ENCODE measurements at regions of chr13 and their contacts with region 1.

Region 1: DNA sequence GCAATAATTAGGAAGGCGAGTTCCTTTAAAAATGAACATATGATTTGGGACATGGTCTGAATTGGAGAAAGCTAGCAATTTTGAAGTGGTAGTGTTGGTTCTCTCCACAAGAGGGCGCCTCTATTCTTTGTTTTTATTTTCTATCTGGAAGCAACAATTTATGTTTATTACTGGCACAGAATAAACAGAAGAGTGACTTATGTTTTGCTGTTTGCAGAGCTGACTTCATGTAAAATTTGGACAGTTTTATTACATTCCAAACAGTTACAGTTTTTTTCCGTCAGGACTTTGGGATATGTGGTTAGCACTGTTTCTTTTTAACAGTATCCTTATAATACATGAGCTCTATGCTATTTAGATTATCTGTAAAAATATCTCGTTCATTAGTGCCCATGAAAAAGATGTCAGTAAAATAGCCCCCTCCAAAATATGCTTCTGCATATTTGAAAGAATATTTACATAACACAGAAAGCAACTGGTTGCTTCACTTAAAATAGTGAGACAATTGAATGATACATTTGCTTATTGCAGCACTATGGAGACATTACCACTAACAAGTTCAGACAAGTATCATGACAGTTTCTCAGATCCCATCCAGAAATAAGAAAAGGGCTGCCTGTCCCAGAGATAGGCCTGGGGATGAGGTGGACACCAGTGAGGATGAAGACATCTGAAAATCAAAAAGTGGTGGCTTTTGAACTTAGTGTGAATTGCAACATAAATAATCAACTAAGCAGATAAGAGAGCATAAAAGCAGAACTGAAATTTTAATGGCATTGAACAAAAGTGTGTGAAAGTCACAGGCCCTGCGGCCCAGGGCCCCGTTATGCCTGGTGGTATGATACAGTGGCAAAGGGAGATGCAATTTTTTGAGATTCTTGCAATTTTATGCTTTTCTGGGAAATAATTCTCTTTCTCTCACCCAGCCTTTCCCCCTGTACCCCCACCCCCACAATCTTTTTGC is 32.3 kb upstream of the FGF9 start:
- DNase-seq: no peak
- ATAC-seq: no peak
- H3K4me3 ChIP-seq: no peak overlapping the region
- H3K27ac ChIP-seq: no peak overlapping the region
- H3K4me1 ChIP-seq: peaks cover 0 to 5% (median 0%) of the 10 kb centered on the region in 9 donors
- H3K27me3 ChIP-seq: peaks cover 0 to 21% (median 7%) of the 10 kb centered on the region in 7 donors
- CTCF ChIP-seq: peak; percentile 65 to 91 (median 82)

Region 2: GRCh38 chr13:20825477-20825875 is 813.1 kb before region 1 on chr13:
- intact Hi-C with region 1: no loop called
- DNase-seq: no peak
- ATAC-seq: peak in 4 of 8 donors; percentile 38 to 60 (median 43)
- H3K4me3 ChIP-seq: peak overlapping the region in 4 of 10 donors; percentile 1 to 5 (median 2)
- H3K27ac ChIP-seq: peak overlapping the region in 9 of 10 donors; percentile 6 to 79 (median 46)
- H3K4me1 ChIP-seq: peaks cover 0 to 30% (median 10%) of the 10 kb centered on the region in 9 donors
- H3K27me3 ChIP-seq: no peaks in the 10 kb centered on the region
- CTCF ChIP-seq: no peak

Region 3: GRCh38 chr13:21443171-21443570 is 195.4 kb before region 1 on chr13:
- intact Hi-C with region 1: no loop called
- DNase-seq: no peak
- ATAC-seq: no peak
- H3K4me3 ChIP-seq: no peak overlapping the region
- H3K27ac ChIP-seq: no peak overlapping the region
- H3K4me1 ChIP-seq: peaks cover 0 to 59% (median 0%) of the 10 kb centered on the region in 9 donors
- H3K27me3 ChIP-seq: no peaks in the 10 kb centered on the region
- CTCF ChIP-seq: no peak

Region 4: GRCh38 chr13:21567714-21568113 is 70.9 kb before region 1 on chr13:
- intact Hi-C with region 1: no loop called
- DNase-seq: no peak
- ATAC-seq: no peak
- H3K4me3 ChIP-seq: no peak overlapping the region
- H3K27ac ChIP-seq: no peak overlapping the region
- H3K4me1 ChIP-seq: peaks cover 0 to 9% (median 4%) of the 10 kb centered on the region in 9 donors
- H3K27me3 ChIP-seq: no peaks in the 10 kb centered on the region
- CTCF ChIP-seq: no peak

Region 5: GRCh38 chr13:22278336-22278929 is 639.8 kb after region 1 on chr13:
- intact Hi-C with region 1: loop called in 5 of 10 experiments (anchors 5 to 10 kb)
- DNase-seq: peak; percentile 17 to 55
- ATAC-seq: peak in 2 of 8 donors; percentile 39 to 65
- H3K4me3 ChIP-seq: no peak overlapping the region
- H3K27ac ChIP-seq: no peak overlapping the region
- H3K4me1 ChIP-seq: peaks cover 0 to 3% (median 0%) of the 10 kb centered on the region in 9 donors
- H3K27me3 ChIP-seq: no peaks in the 10 kb centered on the region
- CTCF ChIP-seq: peak in 8 of 9 donors; percentile 23 to 59 (median 50)

Region 6: DNA sequence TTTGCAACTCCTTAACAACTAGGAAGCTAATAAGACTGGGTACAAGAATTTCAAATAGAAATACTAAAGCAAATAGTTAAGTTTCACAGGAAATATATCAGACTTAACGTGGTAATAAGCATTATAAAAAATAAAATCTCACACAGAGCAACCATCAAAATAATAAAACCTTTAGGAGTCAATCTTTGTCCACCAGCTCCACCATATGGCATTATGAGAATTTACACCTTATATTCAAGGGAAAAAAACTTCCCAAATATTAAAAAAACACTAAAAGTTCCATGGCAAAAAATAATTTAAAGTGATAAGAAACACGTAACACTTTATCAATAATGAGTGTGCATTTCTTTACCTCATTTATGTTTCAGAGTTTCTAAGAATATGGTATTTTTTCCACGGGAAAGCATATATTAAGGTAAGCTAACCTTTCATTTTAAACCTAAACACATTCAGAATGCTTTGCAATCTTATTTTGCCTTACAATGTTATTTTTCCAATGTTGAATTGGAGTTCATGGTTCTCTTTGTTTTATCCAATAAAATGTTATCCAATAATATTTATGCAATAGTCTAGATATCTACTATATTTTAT is 1119.0 kb after region 1 on chr13:
- intact Hi-C with region 1: loop called in 7 of 10 experiments (anchors 5 to 10 kb)
- DNase-seq: no peak
- ATAC-seq: no peak
- H3K4me3 ChIP-seq: no peak overlapping the region
- H3K27ac ChIP-seq: no peak overlapping the region
- H3K4me1 ChIP-seq: no peaks in the 10 kb centered on the region
- H3K27me3 ChIP-seq: no peaks in the 10 kb centered on the region
- CTCF ChIP-seq: peak in 8 of 9 donors; percentile 11 to 68 (median 50)

Region 7: DNA sequence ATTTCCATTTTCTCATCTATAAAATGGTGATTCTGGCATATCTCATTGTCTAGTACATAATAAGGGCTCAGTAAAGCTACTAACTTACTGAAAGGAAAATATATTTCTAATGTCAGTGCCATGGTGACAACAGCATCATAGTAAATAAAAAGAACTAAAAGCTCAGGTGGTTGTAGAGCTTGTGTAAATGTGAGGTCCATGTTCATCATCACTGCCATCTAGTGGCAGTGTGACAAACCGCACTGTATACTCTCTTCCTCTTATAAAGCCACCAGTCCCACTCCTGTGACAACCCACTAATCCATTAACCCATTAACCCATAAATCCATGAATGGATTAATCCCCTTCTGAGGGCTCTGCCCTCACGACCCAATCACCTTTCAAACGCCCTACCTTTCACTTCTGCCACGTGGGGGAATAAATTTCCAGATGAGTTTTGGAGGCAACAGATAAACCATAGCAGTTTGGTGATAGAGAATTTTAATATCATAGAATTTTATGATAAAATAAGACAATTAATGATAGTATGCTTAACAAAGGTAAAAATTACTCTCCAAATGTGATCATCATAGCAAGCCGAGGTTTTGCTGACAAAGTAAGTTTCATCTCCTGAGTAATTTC is 1381.7 kb after region 1 on chr13:
- intact Hi-C with region 1: loop called in 1 of 10 experiments (anchors 10 kb)
- DNase-seq: peak in 1 of 2 donors; percentile 24
- ATAC-seq: peak in 3 of 8 donors; percentile 46 to 75 (median 52)
- H3K4me3 ChIP-seq: no peak overlapping the region
- H3K27ac ChIP-seq: no peak overlapping the region
- H3K4me1 ChIP-seq: no peaks in the 10 kb centered on the region
- H3K27me3 ChIP-seq: peaks cover 0 to 4% (median 0%) of the 10 kb centered on the region in 7 donors
- CTCF ChIP-seq: peak; percentile 48 to 87 (median 78)

Measured in heart right ventricle (tissue), 16 donors.